T-cell (primary cell): ENCODE measurements at regions of chr6 and their contacts with region 1.

Region 1: DNA sequence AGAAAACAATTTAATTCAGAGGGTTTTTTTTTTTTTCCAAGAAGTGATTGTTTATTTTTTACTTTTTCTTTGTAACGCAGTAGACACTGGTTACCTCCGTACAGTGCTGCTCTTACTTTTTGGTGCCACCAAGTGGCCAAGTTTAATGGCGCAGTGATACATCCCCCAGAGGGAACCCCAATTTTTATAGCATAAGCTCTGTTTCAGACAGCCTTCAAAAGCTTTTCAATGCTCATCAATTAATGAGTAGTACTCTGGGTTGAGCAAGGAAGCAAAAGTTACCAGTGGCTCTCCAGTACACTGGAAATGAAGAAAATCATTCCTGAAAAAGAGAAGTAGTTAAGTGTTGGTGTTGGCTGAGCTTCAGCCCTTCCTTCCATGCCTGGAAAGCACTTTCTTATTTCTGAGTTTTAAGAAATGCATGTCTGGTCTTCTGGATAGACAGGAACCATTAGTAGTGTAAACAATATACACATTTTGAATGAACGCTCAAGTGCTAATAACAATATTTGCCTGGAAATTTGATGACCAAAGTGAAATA is 129.1 kb upstream of the SMLR1 start:
- DNase-seq: peak in 32 of 35 experiments; percentile 6 to 69 (median 28)
- ATAC-seq: peak; percentile 84 to 94 (median 92)
- H3K4me3 ChIP-seq: no peak overlapping the region
- H3K4me3 Mint-ChIP-seq: peak overlapping the region in 2 of 3 donors; percentile 11 to 13
- H3K27ac ChIP-seq: no peak overlapping the region
- H3K27ac Mint-ChIP-seq: no peak overlapping the region
- H3K4me1 ChIP-seq: peaks cover 3 to 13% of the 10 kb centered on the region in 2 experiments
- H3K4me1 Mint-ChIP-seq: peaks cover 46 to 53% (median 52%) of the 10 kb centered on the region in 3 donors
- H3K27me3 ChIP-seq: peaks cover 0 to 7% of the 10 kb centered on the region in 2 experiments
- H3K27me3 Mint-ChIP-seq: peaks cover 0 to 2% of the 10 kb centered on the region in 2 donors

Region 2: DNA sequence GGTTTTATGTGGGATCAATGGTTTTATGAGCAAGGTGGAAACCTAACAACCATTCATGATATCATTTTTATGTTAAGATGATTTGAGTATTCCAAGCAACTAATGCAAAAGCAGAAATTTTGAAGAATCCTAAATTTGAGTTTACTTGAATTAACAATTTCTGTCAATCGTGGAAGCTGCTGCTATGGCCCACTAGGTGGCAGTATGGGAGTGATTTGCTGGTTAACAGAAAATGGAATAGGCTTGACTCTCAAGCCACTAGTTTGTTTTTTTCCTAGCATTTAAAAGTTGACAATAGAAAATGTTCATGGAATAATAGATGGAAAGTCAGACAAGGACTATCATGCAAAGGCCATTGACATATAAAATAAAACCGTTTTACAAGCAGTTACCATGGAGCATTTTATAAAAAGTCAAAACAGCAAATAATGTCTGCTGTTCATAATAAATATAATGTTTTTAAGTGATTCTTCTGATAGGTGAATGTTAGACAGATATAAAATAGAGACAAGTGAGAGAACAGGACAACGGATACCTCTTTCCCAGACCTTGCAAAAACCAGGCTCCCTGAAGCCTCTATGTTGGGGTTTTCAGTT is 375.3 kb before region 1 on chr6:
- CTCF ChIA-PET with region 1: interaction called, 7 to 19 read pairs
- POLR2A ChIA-PET with region 1: no interaction called
- DNase-seq: peak in 32 of 35 experiments; percentile 12 to 85 (median 42)
- ATAC-seq: peak in 2 of 4 experiments; percentile 33 to 48
- H3K4me3 ChIP-seq: no peak overlapping the region
- H3K4me3 Mint-ChIP-seq: no peak overlapping the region
- H3K27ac ChIP-seq: no peak overlapping the region
- H3K27ac Mint-ChIP-seq: no peak overlapping the region
- H3K4me1 ChIP-seq: peaks cover 0 to 5% of the 10 kb centered on the region in 2 experiments
- H3K4me1 Mint-ChIP-seq: peaks cover 0 to 6% (median 5%) of the 10 kb centered on the region in 3 donors
- H3K27me3 ChIP-seq: no peaks in the 10 kb centered on the region
- H3K27me3 Mint-ChIP-seq: no peaks in the 10 kb centered on the region

Region 3: GRCh38 chr6:130602151-130602770 is 95.8 kb before region 1 on chr6:
- CTCF ChIA-PET with region 1: no interaction called
- POLR2A ChIA-PET with region 1: no interaction called
- DNase-seq: no peak
- ATAC-seq: peak; percentile 50 to 70 (median 58)
- H3K4me3 ChIP-seq: no peak overlapping the region
- H3K4me3 Mint-ChIP-seq: no peak overlapping the region
- H3K27ac ChIP-seq: no peak overlapping the region
- H3K27ac Mint-ChIP-seq: peak overlapping the region in 1 of 2 donors; percentile 8
- H3K4me1 ChIP-seq: peaks cover 3% of the 10 kb centered on the region in 2 experiments
- H3K4me1 Mint-ChIP-seq: peaks cover 14 to 28% (median 27%) of the 10 kb centered on the region in 3 donors
- H3K27me3 ChIP-seq: no peaks in the 10 kb centered on the region
- H3K27me3 Mint-ChIP-seq: no peaks in the 10 kb centered on the region

Region 4: GRCh38 chr6:130717657-130718056 is 19.6 kb after region 1 on chr6:
- CTCF ChIA-PET with region 1: no interaction called
- POLR2A ChIA-PET with region 1: no interaction called
- DNase-seq: peak in 1 of 35 experiments; percentile 19
- ATAC-seq: peak; percentile 43 to 77 (median 55)
- H3K4me3 ChIP-seq: no peak overlapping the region
- H3K4me3 Mint-ChIP-seq: no peak overlapping the region
- H3K27ac ChIP-seq: no peak overlapping the region
- H3K27ac Mint-ChIP-seq: peak overlapping the region in 1 of 2 donors; percentile 37
- H3K4me1 ChIP-seq: peaks cover 0 to 9% of the 10 kb centered on the region in 2 experiments
- H3K4me1 Mint-ChIP-seq: peaks cover 15 to 21% (median 20%) of the 10 kb centered on the region in 3 donors
- H3K27me3 ChIP-seq: no peaks in the 10 kb centered on the region
- H3K27me3 Mint-ChIP-seq: no peaks in the 10 kb centered on the region

Region 5: DNA sequence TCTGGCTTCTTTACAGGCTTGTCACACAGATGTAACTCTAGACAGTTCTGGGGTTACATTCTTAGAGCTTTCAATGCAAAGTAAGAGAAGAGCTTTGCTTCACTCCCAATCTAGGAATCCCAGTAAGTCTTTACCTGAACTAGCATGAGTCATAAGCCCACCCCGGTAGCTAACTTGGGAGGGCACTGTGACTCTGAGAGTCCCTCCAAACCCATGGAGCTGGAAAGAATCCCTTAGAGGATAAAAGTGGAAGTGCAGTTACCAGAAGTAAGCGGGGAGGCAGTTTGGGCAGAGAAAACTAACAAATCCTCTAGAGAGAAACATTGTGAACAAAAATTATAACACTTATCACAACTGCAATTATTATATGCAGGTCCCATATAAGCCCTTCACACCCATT is 45.1 kb after region 1 on chr6:
- CTCF ChIA-PET with region 1: interaction called in 1 of 2 experiments, 3 read pairs
- POLR2A ChIA-PET with region 1: interaction called in 1 of 2 experiments, 11 read pairs
- DNase-seq: no peak
- ATAC-seq: no peak
- H3K4me3 ChIP-seq: no peak overlapping the region
- H3K4me3 Mint-ChIP-seq: no peak overlapping the region
- H3K27ac ChIP-seq: no peak overlapping the region
- H3K27ac Mint-ChIP-seq: no peak overlapping the region
- H3K4me1 ChIP-seq: no peaks in the 10 kb centered on the region
- H3K4me1 Mint-ChIP-seq: peaks cover 0 to 3% (median 2%) of the 10 kb centered on the region in 3 donors
- H3K27me3 ChIP-seq: no peaks in the 10 kb centered on the region
- H3K27me3 Mint-ChIP-seq: peaks cover 7 to 13% of the 10 kb centered on the region in 2 donors

Region 6: GRCh38 chr6:130788954-130789353 is 90.9 kb after region 1 on chr6:
- CTCF ChIA-PET with region 1: no interaction called
- POLR2A ChIA-PET with region 1: no interaction called
- DNase-seq: no peak
- ATAC-seq: no peak
- H3K4me3 ChIP-seq: no peak overlapping the region
- H3K4me3 Mint-ChIP-seq: no peak overlapping the region
- H3K27ac ChIP-seq: no peak overlapping the region
- H3K27ac Mint-ChIP-seq: no peak overlapping the region
- H3K4me1 ChIP-seq: no peaks in the 10 kb centered on the region
- H3K4me1 Mint-ChIP-seq: no peaks in the 10 kb centered on the region
- H3K27me3 ChIP-seq: peaks cover 0 to under 1% of the 10 kb centered on the region in 2 experiments
- H3K27me3 Mint-ChIP-seq: no peaks in the 10 kb centered on the region

Region 7: DNA sequence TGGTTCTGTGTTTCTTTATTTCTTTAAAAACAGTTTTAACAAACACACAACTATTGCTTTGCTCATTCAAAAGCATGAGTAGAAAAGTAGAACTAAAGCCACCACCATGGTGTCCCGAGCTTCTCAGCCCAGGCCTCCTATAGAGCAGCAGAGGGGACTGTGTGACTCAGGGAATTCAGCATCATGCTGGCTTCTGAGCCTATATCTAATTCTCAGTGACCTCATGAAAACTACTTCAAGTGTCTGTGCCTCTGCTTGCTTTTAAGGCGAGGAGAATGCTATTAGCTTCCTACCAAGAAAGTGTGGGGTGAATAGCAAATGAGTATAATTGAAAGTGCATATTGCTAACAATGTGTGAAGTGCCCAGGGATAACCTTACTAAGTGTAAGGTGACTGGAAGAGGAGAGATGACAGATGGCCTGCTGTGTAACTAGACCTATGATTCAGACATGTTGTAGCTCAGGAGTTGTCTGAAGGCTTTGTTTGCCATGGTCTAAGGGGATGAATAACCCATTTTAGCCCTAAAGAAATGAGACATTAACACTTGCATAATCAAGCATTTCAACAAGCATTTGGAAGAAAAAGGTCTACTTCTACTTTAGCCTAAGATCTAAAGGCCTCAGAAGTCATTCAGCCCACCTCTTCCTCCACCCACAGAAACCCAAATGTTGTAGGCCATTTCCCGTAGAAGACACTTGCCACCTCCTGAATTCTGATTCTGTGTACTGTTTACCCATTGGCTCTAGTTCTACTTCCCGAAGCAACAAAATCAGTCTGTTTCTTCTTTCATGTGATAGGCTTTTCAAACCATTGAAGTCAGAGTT is 753.5 kb after region 1 on chr6:
- CTCF ChIA-PET with region 1: no interaction called
- POLR2A ChIA-PET with region 1: no interaction called
- DNase-seq: no peak
- ATAC-seq: peak in 1 of 4 experiments; percentile 58
- H3K4me3 ChIP-seq: no peak overlapping the region
- H3K4me3 Mint-ChIP-seq: peak overlapping the region in 2 of 3 donors; percentile 7 to 39
- H3K27ac ChIP-seq: no peak overlapping the region
- H3K27ac Mint-ChIP-seq: peak overlapping the region in 1 of 2 donors; percentile 75
- H3K4me1 ChIP-seq: no peaks in the 10 kb centered on the region
- H3K4me1 Mint-ChIP-seq: peaks cover 24 to 43% (median 36%) of the 10 kb centered on the region in 3 donors
- H3K27me3 ChIP-seq: no peaks in the 10 kb centered on the region
- H3K27me3 Mint-ChIP-seq: no peaks in the 10 kb centered on the region